Calu3 (cell line): ENCODE measurements at regions of chrX and their contacts with region 1.

Region 1: DNA sequence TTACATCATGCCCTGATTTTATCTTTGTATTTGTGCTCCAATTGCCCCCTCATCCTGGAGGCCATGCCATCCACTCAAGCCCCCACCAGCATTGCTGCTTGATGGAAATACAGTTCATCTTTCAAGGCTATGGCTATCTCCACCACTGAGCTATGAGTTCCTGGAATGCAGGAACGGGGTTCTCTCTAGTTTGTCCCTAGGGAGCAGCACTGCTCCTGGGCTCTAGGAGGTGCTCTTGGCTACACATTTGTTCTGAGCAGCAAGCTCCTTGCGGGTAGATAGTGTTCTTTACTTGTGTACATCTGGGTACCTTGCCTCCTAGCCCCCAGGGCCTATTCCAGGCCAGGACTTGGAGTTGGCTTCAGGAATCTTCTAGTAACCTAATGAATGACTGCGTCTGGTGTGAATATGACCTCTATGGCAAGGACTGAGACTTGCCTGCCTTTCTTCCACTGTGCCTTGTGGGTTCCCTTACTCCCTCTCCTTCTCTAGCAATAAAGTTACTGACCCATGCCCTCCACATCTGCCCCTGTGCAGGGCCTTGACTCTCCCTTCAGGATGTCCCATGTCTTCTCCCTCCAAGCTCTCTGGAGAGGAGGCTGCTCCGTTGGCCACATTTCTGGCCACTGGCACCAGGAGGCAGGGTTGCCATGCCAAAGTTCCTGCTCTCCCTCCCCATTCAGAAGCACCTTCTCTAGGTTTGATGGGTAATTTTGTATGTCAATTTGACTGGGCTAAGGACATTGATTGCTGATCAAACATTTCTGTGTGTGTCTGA is 7.6 kb downstream of the CITED1 start:
- DNase-seq: no peak
- H3K4me3 Mint-ChIP-seq: no peak overlapping the region
- H3K27ac Mint-ChIP-seq: no peak overlapping the region
- H3K4me1 Mint-ChIP-seq: no peaks in the 10 kb centered on the region
- H3K27me3 Mint-ChIP-seq: peaks cover 67% of the 10 kb centered on the region
- CTCF ChIP-seq: no peak

Region 2: GRCh38 chrX:72041871-72042851 is 256.0 kb before region 1 on chrX:
- CTCF ChIA-PET with region 1: no interaction called
- intact Hi-C with region 1: no loop called
- DNase-seq: no peak
- H3K4me3 Mint-ChIP-seq: no peak overlapping the region
- H3K27ac Mint-ChIP-seq: no peak overlapping the region
- H3K4me1 Mint-ChIP-seq: no peaks in the 10 kb centered on the region
- H3K27me3 Mint-ChIP-seq: peaks cover 55% of the 10 kb centered on the region
- CTCF ChIP-seq: no peak

Region 3: DNA sequence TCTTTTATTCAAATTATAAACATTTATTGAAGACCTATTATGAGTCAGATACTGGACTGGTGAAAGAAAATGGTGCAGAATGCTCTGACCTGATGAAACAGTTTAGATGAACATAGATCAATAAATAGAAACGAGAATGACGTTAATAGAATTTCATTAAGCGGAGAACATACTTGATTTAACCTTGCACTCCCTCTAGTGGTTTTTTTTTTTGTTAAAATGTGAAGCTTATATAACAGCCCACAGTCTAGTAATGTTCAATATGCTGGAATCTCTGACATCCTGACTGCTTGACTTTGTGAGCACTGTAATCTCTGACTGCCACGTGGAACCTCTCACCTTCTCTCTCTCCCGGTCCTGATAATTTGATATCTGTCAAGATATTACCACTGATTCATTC is 242.2 kb after region 1 on chrX:
- CTCF ChIA-PET with region 1: interaction called, 5 read pairs
- intact Hi-C with region 1: loop called (anchors 2 kb)
- DNase-seq: no peak
- H3K4me3 Mint-ChIP-seq: no peak overlapping the region
- H3K27ac Mint-ChIP-seq: no peak overlapping the region
- H3K4me1 Mint-ChIP-seq: peaks cover 8% of the 10 kb centered on the region
- H3K27me3 Mint-ChIP-seq: no peaks in the 10 kb centered on the region
- CTCF ChIP-seq: no peak